Tibial artery (tissue), 4 donors: ENCODE measurements at regions of chr22 and their contacts with region 1.

Region 1: GRCh38 chr22:31148953-31149627 is 8.8 kb upstream of the PLA2G3 start:
- DNase-seq: peak; percentile 61 to 82
- H3K4me3 ChIP-seq: no peak overlapping the region
- H3K27ac ChIP-seq: peak overlapping the region; percentile 62 to 74
- H3K4me1 ChIP-seq: peaks cover 0 to 31% (median 16%) of the 10 kb centered on the region in 4 donors
- H3K27me3 ChIP-seq: no peaks in the 10 kb centered on the region
- CTCF ChIP-seq: peak; percentile 91 to 95

Region 2: DNA sequence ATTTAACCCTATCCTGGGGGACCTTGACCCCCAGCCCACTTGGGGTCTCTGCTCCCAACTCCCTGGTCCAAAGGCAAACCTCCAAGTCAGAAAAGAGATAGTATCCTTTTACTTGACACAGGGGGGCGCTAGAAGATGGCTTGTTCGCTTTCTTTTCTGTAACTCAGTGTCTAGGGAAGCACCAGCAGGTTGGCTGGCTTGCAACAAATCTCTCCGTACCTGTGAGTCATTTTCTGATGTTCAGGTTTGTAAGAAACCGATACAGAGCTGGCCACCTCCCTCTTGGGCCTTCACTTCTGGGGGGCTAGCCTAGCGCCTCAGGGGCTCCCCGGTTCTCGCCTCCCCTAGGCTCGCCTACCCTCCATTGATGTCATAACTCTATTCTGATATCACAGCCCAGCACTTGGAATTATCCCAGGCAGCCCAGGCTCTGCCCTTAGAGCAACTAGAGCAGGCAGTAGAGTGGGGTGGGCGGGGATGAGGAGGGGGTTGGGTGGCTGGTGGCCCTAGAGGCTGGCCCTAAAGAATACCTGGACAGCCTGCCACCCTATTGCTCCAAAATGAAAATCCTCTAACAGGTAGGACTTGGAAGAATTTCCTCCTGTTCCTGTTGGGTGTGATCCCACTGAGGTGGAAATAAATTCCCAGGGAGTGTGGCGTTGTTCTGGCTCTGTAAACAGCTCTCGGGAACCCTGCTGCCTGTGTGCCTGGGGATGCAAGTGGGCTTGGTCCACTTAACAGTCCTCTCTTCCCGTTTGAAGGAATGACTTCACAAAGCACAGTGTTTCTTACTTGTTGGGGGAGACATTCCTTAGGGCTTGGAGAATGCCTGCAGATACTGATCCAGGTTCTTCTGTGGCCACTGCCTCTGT is 385.0 kb before region 1 on chr22:
- intact Hi-C with region 1: loop called (anchors 10 kb)
- DNase-seq: no peak
- H3K4me3 ChIP-seq: no peak overlapping the region
- H3K27ac ChIP-seq: no peak overlapping the region
- H3K4me1 ChIP-seq: no peaks in the 10 kb centered on the region
- H3K27me3 ChIP-seq: no peaks in the 10 kb centered on the region
- CTCF ChIP-seq: peak; percentile 53 to 61

Region 3: DNA sequence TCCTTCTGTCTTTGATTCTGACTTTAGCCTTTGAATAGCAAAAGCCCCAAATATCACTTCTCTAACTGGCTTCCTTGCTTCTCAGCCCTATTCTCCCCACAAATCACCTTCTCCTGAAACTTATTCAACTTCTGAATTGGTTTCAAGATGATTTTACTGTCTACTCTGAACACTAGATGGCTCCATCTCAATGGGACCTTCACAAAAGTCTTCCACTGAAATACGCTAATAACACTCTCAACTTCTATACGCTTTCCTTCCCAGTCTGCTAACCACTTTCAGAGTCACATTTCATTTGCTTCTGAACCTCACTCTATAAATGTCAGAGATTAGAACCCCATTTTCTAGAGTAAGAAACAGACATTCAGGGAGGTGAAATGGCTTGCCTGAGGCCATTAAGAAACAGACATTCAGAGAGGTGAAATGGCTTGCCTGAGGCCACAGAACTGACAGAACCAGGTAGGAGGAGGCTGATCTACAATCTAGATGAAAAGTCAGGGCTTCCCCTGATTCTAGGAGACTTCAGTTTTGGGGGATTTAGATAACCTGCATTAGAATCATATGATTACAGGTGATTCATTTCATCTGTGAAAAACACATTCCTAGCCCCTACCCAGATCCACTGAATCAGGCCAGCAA is 201.2 kb before region 1 on chr22:
- intact Hi-C with region 1: loop called (anchors 10 kb)
- DNase-seq: no peak
- H3K4me3 ChIP-seq: no peak overlapping the region
- H3K27ac ChIP-seq: peak overlapping the region; percentile 80 to 83
- H3K4me1 ChIP-seq: peaks cover 0 to 100% (median 71%) of the 10 kb centered on the region in 4 donors
- H3K27me3 ChIP-seq: no peaks in the 10 kb centered on the region
- CTCF ChIP-seq: peak; percentile 59 to 71

Region 4: GRCh38 chr22:31248138-31248745 is 99.2 kb after region 1 on chr22:
- intact Hi-C with region 1: no loop called
- DNase-seq: peak; percentile 78 to 86
- H3K4me3 ChIP-seq: peak overlapping the region; percentile 57 to 69
- H3K27ac ChIP-seq: peak overlapping the region; percentile 68 to 70
- H3K4me1 ChIP-seq: peaks cover 3 to 56% (median 39%) of the 10 kb centered on the region in 4 donors
- H3K27me3 ChIP-seq: no peaks in the 10 kb centered on the region
- CTCF ChIP-seq: no peak